Aorta (tissue), 5 donors: ENCODE measurements at regions of chr1 and their contacts with region 1.

Region 1: GRCh38 chr1:186535388-186536133 is 74.6 kb upstream of the PDC start:
- DNase-seq: no peak
- ATAC-seq: no peak
- H3K4me3 ChIP-seq: no peak overlapping the region
- H3K27ac ChIP-seq: no peak overlapping the region
- H3K4me1 ChIP-seq: no peaks in the 10 kb centered on the region
- H3K27me3 ChIP-seq: no peaks in the 10 kb centered on the region

Region 2: DNA sequence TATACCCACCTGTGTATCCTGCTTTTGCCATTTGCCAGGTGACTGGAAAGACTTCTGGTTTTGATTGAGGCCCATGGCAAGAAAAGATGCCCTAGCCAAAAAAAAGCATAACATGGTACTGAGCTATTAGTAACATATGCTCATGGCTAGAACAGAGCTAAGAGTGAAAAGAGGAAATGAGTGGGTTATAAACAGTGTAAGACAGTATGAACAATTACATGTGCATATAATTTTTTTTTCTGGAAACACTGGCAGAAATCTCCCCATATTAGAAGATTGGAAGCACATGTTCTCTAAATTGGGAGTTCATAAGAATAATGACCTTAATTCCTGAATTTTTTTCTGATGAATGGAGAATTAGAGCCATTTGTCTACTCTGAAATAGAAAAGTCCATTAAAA is 33.5 kb before region 1 on chr1:
- intact Hi-C with region 1: loop called in 1 of 2 experiments (anchors 5 kb)
- DNase-seq: no peak
- ATAC-seq: no peak
- H3K4me3 ChIP-seq: no peak overlapping the region
- H3K27ac ChIP-seq: no peak overlapping the region
- H3K4me1 ChIP-seq: no peaks in the 10 kb centered on the region
- H3K27me3 ChIP-seq: no peaks in the 10 kb centered on the region

Region 3: DNA sequence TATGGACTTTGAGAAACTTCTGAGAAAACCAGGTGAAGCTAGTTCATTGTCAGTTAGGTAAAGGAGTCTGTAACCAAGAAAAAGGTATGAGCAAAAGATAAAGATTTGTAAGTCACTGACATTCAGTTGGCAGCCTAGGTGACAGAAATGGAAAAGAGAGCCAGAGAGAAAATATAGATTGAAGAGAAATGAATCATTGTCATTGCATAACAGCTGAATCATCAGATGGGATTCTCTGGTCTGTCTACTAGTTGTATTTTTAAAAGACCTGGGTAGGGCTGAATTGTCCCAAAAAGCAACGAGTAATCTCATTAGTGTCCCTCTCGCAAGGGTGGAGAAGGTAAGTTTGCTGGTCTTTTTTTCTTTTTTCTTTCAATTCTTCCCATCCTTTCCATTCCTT is 108.0 kb after region 1 on chr1:
- intact Hi-C with region 1: no loop called
- DNase-seq: no peak
- ATAC-seq: no peak
- H3K4me3 ChIP-seq: no peak overlapping the region
- H3K27ac ChIP-seq: no peak overlapping the region
- H3K4me1 ChIP-seq: no peaks in the 10 kb centered on the region
- H3K27me3 ChIP-seq: no peaks in the 10 kb centered on the region